Activated CD4-positive, alpha-beta T cell treated with anti-CD3 and anti-CD28 coated beads, Interleukin-2, amount 10 ng/mL, durations not matched to agents 24 days and 14 days (primary cell): ENCODE measurements at regions of chr10 and their contacts with region 1.

Region 1: DNA sequence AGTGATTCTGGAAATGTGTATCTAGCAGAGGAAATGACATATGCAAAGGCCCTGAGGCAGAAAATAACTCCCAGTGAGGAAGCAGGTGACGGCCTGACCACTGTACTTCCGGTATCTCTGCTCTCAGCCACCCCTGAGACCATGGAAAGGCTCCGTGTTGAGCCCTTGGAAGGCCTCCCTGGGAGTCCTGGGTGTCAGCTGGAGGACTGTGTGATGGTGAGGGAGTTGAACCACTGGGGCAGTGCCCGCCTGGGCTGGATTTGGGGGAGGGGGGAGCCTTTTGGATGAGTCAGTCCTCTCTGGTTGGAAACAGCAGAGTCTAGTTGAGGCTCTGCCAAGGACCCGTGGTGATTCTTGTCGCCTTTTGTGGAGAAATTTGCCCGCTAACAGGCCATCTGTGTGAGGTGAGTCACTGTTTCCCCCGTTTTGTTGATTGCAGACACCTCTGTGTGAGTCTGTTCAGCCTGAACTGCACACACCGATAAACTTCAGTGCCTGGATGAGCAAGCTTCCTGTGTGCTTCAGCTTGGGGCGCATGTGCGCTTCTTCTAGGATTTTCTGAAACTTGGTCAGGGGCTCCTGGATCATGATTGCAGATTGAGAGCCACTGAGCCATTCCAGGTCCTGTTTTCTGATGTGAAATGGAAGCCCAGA is 98.6 kb downstream of the GRK5 start:
- DNase-seq: peak; percentile 95
- H3K4me3 Mint-ChIP-seq: peak overlapping the region; percentile 81
- H3K27ac Mint-ChIP-seq: peak overlapping the region; percentile 100
- H3K4me1 Mint-ChIP-seq: peaks cover 79% of the 10 kb centered on the region
- H3K27me3 Mint-ChIP-seq: peaks cover 2% of the 10 kb centered on the region

Region 2: GRCh38 chr10:119080521-119081260 is 225.3 kb before region 1 on chr10 and contains the start of gene EIF3A:
- intact Hi-C with region 1: loop called (anchors 1 kb)
- DNase-seq: peak; percentile 99
- H3K4me3 Mint-ChIP-seq: peak within 1 kb of the TSS; percentile 87
- H3K27ac Mint-ChIP-seq: peak within 1 kb of the TSS; percentile 92
- H3K4me1 Mint-ChIP-seq: peaks cover 29% of the 10 kb centered on the region
- H3K27me3 Mint-ChIP-seq: no peaks in the 10 kb centered on the region
- total RNA-seq, gene EIF3A: 179 and 183 TPM in 2 replicates

Region 3: GRCh38 chr10:119178372-119179119 is 127.4 kb before region 1 on chr10 and contains the start of gene PRDX3:
- intact Hi-C with region 1: loop called (anchors 1 kb)
- DNase-seq: peak; percentile 98
- H3K4me3 Mint-ChIP-seq: peak within 1 kb of the TSS; percentile 98
- H3K27ac Mint-ChIP-seq: peak within 1 kb of the TSS; percentile 99
- H3K4me1 Mint-ChIP-seq: peaks cover 39% of the 10 kb centered on the region
- H3K27me3 Mint-ChIP-seq: no peaks in the 10 kb centered on the region
- total RNA-seq, gene PRDX3: 179 and 180 TPM in 2 replicates

Region 4: DNA sequence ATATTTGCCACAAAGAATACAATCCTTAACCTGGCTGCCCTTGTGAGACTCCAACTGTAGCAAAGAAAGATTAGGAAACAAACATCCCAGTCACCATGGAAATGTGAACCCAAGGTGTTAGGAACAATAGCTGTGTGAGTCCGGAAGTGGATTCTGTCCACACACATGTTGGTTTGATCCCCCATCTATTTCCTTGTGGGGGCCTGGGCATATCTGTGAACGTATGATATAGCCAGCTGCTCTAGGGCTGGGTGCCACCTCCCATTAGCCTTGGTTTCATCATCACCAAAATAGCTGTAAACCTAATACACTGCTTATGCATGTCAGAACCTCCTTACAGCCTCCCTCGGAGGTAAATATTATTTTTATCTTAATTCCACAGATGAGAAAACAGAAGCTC is 72.2 kb before region 1 on chr10:
- intact Hi-C with region 1: no loop called
- DNase-seq: no peak
- H3K4me3 Mint-ChIP-seq: no peak overlapping the region
- H3K27ac Mint-ChIP-seq: peak overlapping the region; percentile 91
- H3K4me1 Mint-ChIP-seq: peaks cover 58% of the 10 kb centered on the region
- H3K27me3 Mint-ChIP-seq: no peaks in the 10 kb centered on the region

Region 5: DNA sequence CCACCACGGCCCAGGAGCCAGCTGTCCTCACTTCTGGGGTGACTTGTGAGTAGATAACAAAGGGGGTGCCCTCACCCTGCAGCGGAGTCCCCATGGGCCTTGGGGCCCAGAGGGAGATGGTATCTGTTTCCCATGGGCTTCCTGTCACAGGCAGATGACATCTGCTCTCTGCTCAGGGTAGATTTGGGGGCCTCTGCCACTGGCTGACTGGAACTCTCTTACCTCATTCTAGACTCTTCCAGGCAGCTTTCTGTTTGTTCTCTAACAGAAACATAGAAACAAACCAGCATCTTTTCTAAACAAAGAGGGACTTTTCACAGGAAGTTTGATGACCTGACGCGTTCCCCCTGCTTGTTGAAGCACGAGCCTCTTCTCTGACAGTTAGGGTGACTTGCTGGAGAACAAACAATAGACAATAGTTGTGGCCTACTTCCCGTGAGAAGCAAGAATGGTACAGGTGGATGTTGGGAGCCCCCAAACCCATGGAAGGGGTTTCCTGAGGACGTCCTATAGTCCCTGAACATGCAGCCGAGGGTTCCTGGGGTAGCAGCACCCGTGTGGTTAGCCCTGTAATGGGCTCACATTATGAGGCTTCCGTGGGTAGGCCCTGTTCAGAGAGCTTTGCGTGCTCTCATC is 37.0 kb before region 1 on chr10:
- intact Hi-C with region 1: loop called (anchors 1 kb)
- DNase-seq: peak; percentile 95
- H3K4me3 Mint-ChIP-seq: peak overlapping the region; percentile 75
- H3K27ac Mint-ChIP-seq: peak overlapping the region; percentile 99
- H3K4me1 Mint-ChIP-seq: peaks cover 60% of the 10 kb centered on the region
- H3K27me3 Mint-ChIP-seq: no peaks in the 10 kb centered on the region

Region 6: DNA sequence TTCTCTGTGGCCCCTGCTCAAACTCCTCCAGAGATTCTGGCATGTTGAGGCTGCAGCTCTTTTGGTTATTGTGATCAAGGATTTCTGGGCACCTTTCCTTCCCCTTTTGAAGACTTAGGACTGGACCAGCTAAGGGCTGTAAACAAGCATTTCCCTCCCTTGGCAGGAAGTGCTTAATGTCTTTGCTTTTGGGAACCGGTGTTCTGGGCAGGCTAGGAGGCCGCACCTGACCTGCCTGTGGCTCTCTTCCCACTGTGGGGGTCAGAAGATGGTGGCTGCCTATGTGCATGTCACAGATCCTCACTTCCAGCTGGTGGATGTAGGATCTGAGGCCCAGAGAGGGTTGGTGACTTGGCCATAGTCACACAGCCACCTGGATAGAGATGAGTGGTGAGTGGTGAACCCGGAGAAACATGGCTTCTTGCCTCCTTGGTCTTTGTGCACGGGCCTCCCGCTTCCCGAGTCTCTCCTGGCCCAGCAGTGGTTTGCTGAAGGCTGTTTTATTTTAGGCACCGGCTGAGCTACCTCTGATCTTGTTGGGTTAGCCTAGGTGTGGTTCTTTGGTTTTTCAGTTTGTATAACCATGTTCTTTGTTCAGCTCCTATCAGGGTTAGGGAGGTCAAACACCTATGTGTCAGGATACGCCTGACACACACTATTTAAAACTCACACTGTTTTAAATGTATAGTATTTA is 16.6 kb before region 1 on chr10:
- intact Hi-C with region 1: loop called (anchors 1 kb)
- DNase-seq: no peak
- H3K4me3 Mint-ChIP-seq: peak overlapping the region; percentile 55
- H3K27ac Mint-ChIP-seq: peak overlapping the region; percentile 85
- H3K4me1 Mint-ChIP-seq: peaks cover 79% of the 10 kb centered on the region
- H3K27me3 Mint-ChIP-seq: no peaks in the 10 kb centered on the region

Region 7: GRCh38 chr10:119320981-119321380 is 15.0 kb after region 1 on chr10:
- intact Hi-C with region 1: no loop called
- DNase-seq: no peak
- H3K4me3 Mint-ChIP-seq: no peak overlapping the region
- H3K27ac Mint-ChIP-seq: no peak overlapping the region
- H3K4me1 Mint-ChIP-seq: peaks cover 25% of the 10 kb centered on the region
- H3K27me3 Mint-ChIP-seq: peaks cover 1% of the 10 kb centered on the region

Region 8: DNA sequence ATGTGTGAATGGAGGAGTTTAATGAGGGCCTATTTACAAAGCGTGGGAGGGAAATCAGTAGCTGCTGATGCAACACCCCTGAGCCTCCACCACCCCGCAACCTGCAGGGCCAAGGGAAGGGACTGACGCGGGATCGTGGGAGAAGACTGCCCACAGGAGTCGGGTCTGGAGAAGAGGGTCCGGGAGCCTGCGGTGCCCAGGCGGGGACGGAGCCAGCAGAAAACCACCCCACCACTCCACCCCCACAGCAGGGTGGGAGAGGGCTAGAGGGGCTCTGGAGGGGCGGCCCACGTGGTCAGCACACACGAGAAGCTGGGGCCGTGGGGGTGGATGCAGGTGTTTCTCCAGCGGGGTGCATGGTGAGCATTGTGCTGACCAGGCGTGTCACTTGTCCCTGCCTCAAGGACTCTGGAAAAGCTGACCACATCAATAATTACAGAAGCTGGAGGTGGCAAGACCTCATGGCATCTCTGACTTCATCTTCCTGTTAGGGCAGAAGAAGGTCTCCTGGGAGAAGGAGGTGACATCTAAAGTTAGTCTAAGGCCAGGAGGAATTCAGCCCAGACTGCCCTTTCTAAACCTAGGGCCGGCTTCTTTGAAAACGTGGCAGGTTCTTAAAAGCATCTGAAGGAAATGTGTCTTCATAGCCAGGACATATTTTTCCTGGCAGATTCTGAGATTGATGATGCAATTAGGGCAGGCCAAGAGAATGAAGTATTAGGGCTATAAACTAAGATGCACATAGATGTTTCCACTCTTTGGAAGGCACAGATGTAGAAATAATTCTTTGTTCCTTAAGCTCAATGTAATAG is 85.7 kb after region 1 on chr10:
- intact Hi-C with region 1: loop called (anchors 5 kb)
- DNase-seq: no peak
- H3K4me3 Mint-ChIP-seq: no peak overlapping the region
- H3K27ac Mint-ChIP-seq: no peak overlapping the region
- H3K4me1 Mint-ChIP-seq: peaks cover 21% of the 10 kb centered on the region
- H3K27me3 Mint-ChIP-seq: peaks cover 2% of the 10 kb centered on the region

Region 9: DNA sequence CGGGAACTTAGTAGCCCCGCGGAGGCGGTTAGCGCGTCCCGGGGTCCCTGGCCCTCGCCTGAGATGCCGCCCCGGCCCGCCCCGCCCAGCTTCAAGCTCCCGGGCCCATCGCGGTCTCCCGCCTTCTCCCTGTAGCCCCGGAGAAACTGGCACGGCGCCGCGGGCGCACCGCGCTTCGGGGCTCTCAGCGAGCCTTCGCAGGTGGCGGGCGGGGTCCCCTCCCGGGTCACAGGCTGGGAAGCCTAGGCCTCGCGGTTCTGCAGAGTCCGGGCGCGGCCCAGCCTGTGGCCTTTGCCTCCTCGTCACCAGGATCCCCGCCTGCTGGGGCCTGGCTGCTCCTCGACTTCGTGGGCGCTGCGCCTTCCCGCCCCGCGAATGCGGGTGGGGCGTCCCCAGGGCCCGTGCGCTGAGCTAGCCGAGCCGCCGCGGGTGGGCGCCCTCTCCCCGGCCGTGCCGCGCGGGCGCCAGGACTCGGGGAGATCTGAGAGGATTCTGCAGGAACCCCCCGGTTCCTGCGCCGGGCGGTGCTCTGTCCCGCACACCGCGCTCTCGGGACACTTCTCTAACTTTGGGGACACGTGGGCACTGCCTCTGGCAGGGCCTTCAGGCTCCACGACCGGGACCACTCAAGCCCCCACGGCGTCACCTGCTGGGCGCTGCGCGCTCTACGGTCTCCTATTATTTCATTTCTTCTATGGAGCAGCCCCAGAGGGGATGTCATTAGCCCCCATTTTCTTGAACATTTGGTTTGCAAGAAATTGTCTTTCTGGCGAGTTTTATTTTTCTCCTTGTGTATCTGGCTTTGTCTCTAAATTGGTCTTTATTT is 237.2 kb after region 1 on chr10:
- intact Hi-C with region 1: loop called (anchors 5 kb)
- DNase-seq: peak; percentile 89
- H3K4me3 Mint-ChIP-seq: peak overlapping the region; percentile 79
- H3K27ac Mint-ChIP-seq: peak overlapping the region; percentile 91
- H3K4me1 Mint-ChIP-seq: peaks cover 35% of the 10 kb centered on the region
- H3K27me3 Mint-ChIP-seq: peaks cover 20% of the 10 kb centered on the region

Region 10: GRCh38 chr10:119715628-119716505 is 409.9 kb after region 1 on chr10:
- intact Hi-C with region 1: no loop called
- DNase-seq: no peak
- H3K4me3 Mint-ChIP-seq: no peak overlapping the region
- H3K27ac Mint-ChIP-seq: no peak overlapping the region
- H3K4me1 Mint-ChIP-seq: peaks cover 2% of the 10 kb centered on the region
- H3K27me3 Mint-ChIP-seq: peaks cover 3% of the 10 kb centered on the region